ENCODE measurements at regions of chr5 and their contacts with region 1.

Region 1: DNA sequence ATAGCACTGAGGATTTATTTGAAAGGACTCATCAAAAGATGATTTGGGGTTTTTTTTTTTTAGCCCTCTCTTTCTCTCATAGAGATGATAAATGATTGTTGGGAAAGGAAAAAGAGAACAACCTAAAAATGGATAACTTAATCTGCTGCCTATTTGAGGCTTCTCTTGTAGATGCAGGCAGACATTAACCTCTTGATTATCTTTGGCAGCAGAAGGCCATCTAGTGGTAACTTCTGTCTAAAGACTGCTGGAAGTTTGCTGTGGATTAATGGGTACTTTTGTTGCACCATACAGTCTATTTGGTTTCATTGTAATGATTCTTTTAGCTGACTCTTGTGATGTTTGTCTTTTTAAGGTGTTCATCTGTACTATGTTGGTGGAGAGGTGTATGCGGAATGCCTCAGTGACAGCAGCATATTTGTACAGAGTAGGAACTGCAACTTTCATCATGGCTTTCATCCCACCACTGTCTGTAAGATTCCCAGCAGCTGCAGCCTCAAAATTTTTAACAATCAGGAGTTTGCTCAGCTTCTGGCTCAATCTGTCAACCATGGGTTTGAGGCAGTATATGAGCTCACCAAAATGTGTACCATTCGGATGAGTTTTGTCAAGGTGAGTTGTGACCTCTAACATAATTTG is 18.8 kb downstream of the SMIM32 start:
- DNase-seq: peak; percentile 47
- ATAC-seq: peak; percentile 94
- H3K4me3 ChIP-seq: no peak overlapping the region
- H3K27ac ChIP-seq: no peak overlapping the region
- H3K4me1 ChIP-seq: no peaks in the 10 kb centered on the region
- H3K27me3 ChIP-seq: no peaks in the 10 kb centered on the region
- CTCF ChIP-seq: peak; percentile 77

Region 2: DNA sequence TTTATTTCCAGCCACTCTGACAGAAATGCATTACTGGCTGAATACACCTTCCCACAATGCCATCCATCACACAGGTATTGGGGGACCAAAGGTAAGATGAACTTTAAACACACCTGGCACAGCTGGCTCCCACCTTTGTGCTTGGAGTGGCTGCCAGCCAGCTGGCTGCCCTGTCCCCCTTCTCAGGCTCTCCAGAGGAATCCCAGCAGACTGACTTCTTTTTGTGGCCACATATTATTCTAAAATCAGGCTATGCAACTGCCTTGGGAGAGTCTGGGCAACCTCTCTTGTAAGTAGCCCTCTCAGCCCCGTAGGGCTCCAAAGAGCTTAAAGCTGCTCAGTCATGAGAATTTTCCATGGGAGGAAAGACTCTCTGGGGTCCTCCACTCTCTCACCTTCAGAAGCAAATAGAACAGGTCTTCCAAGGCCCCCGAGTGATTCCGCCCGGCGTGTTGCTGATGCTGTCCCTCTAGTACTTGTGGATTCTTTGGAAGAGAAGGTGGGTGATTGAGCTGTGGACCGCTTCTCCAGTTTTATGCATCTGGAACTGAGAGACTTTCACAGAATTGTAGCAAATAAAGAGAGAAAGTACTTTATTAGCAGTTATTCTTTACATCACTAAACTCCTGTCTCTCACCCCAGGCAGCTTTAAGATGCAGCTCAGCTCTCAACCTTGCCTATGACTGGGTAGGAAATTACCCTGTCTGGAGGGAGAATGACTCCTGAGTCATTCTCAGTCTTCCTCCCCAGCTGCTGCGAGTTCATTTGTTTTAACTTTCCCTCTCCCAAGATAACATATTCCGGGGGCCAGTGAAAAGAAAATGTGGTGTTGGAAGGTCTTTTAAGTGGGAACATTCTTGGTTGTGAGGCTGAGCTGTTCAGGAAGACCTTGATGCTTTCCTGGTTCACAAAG is 980.7 kb before region 1 on chr5:
- CTCF ChIA-PET with region 1: no interaction called
- POLR2A ChIA-PET with region 1: no interaction called
- in situ Hi-C with region 1: no loop called
- intact Hi-C with region 1: no loop called
- DNase-seq: no peak
- ATAC-seq: no peak
- H3K4me3 ChIP-seq: no peak overlapping the region
- H3K27ac ChIP-seq: no peak overlapping the region
- H3K4me1 ChIP-seq: peaks cover 3% of the 10 kb centered on the region; the same call in 1 of the 2 replicates
- H3K27me3 ChIP-seq: no peaks in the 10 kb centered on the region
- CTCF ChIP-seq: no peak

Region 3: DNA sequence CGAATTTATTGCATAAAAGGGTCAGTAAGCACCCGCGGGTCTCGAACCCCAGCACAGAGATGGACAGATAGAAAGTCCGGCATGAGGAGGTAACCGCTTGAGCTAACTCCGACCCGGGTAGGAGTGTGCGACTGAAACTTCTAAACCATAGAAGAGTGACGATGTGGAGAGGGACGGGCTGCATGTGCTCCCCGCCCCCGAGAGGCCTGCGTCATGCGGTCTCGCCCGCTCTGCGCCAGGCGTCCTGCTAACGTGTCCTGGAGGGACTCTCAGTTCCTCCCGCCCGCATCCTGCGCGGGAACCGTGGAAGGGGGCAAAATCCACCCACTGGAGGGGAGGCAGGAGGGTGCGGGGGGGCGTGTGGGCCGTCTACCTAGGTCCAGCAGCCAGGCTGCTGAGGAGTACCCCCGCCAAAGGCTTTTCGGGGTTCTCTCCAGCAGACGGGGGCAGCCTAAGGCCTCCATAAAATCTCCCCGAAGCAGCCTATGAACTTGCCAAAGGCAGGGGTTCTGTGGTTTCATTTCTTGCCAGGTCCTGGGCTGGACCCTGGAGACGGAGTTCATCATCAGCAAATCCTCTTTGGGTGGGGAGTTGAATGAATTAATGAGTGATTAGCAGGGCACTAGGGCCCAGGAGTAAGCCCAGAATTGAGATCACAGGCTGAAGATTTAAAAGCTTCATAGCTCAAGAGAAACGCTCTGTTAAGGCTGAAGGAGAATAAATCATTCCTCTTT is 93.5 kb before region 1 on chr5:
- CTCF ChIA-PET with region 1: no interaction called
- POLR2A ChIA-PET with region 1: no interaction called
- in situ Hi-C with region 1: no loop called
- intact Hi-C with region 1: loop called (anchors 10 kb)
- DNase-seq: no peak
- ATAC-seq: no peak
- H3K4me3 ChIP-seq: no peak overlapping the region
- H3K27ac ChIP-seq: no peak overlapping the region
- H3K4me1 ChIP-seq: no peaks in the 10 kb centered on the region
- H3K27me3 ChIP-seq: no peaks in the 10 kb centered on the region
- CTCF ChIP-seq: no peak